Activated T-helper 1 cell treated with anti-CD3 and anti-CD28 coated beads, Interleukin-12 subunit alpha, Interleukin-12 subunit beta, Interleukin-2, Interleukin-4 antibody, amounts not matched to agents 30 ng/mL and 10 ng/mL and 1 ng/mL, durations not matched to agents 14 hours and 24 hours and 36 hours (primary cell): ENCODE measurements at regions of chr11 and their contacts with region 1.

Region 1: GRCh38 chr11:108697872-108698473 is 33.1 kb downstream of the DDX10 start:
- DNase-seq: peak; percentile 5
- H3K4me3 Mint-ChIP-seq: no peak overlapping the region
- H3K27ac Mint-ChIP-seq: no peak overlapping the region
- H3K4me1 Mint-ChIP-seq: no peaks in the 10 kb centered on the region
- H3K27me3 Mint-ChIP-seq: no peaks in the 10 kb centered on the region

Region 2: GRCh38 chr11:108685419-108686130 is 12.4 kb before region 1 on chr11:
- intact Hi-C with region 1: no loop called
- DNase-seq: no peak
- H3K4me3 Mint-ChIP-seq: no peak overlapping the region
- H3K27ac Mint-ChIP-seq: no peak overlapping the region
- H3K4me1 Mint-ChIP-seq: peaks cover 11% of the 10 kb centered on the region
- H3K27me3 Mint-ChIP-seq: no peaks in the 10 kb centered on the region

Region 3: GRCh38 chr11:108871152-108871551 is 173.2 kb after region 1 on chr11:
- intact Hi-C with region 1: loop called (anchors 1 kb)
- DNase-seq: no peak
- H3K4me3 Mint-ChIP-seq: no peak overlapping the region
- H3K27ac Mint-ChIP-seq: no peak overlapping the region
- H3K4me1 Mint-ChIP-seq: peaks cover 12% of the 10 kb centered on the region
- H3K27me3 Mint-ChIP-seq: no peaks in the 10 kb centered on the region

Region 4: GRCh38 chr11:109085708-109086373 is 387.9 kb after region 1 on chr11:
- intact Hi-C with region 1: no loop called
- DNase-seq: no peak
- H3K4me3 Mint-ChIP-seq: no peak overlapping the region
- H3K27ac Mint-ChIP-seq: no peak overlapping the region
- H3K4me1 Mint-ChIP-seq: no peaks in the 10 kb centered on the region
- H3K27me3 Mint-ChIP-seq: peaks cover 1% of the 10 kb centered on the region

Region 5: GRCh38 chr11:109697140-109697843 is 999.3 kb after region 1 on chr11:
- intact Hi-C with region 1: loop called (anchors 2 kb)
- DNase-seq: no peak
- H3K4me3 Mint-ChIP-seq: no peak overlapping the region
- H3K27ac Mint-ChIP-seq: no peak overlapping the region
- H3K4me1 Mint-ChIP-seq: no peaks in the 10 kb centered on the region
- H3K27me3 Mint-ChIP-seq: no peaks in the 10 kb centered on the region